GM12878 (cell line): ENCODE measurements at regions of chr19 and their contacts with region 1.

Region 1: GRCh38 chr19:9796113-9796773 is 22.6 kb downstream of the FBXL12 start:
- DNase-seq: peak; percentile 66
- ATAC-seq: peak; percentile 91
- H3K4me3 ChIP-seq: no peak overlapping the region
- H3K27ac ChIP-seq: no peak overlapping the region
- H3K4me1 ChIP-seq: no peaks in the 10 kb centered on the region
- H3K27me3 ChIP-seq: no peaks in the 10 kb centered on the region
- CTCF ChIP-seq: peak; percentile 79 to 94 (median 86)
- EP300 ChIP-seq: no peak
- POLR2A ChIP-seq: no peak
- RAD21 ChIP-seq: peak; percentile 90

Region 2: GRCh38 chr19:8654591-8655339 is 1141.5 kb before region 1 on chr19:
- CTCF ChIA-PET with region 1: no interaction called
- POLR2A ChIA-PET with region 1: no interaction called
- RAD21 ChIA-PET with region 1: no interaction called
- SMC1A ChIA-PET with region 1: no interaction called
- in situ Hi-C with region 1: no loop called
- intact Hi-C with region 1: loop called (anchors 10 kb)
- DNase-seq: no peak
- ATAC-seq: peak; percentile 73
- H3K4me3 ChIP-seq: no peak overlapping the region
- H3K27ac ChIP-seq: no peak overlapping the region
- H3K4me1 ChIP-seq: no peaks in the 10 kb centered on the region
- H3K27me3 ChIP-seq: no peaks in the 10 kb centered on the region
- CTCF ChIP-seq: peak; percentile 81 to 95 (median 88)
- EP300 ChIP-seq: no peak
- POLR2A ChIP-seq: no peak
- RAD21 ChIP-seq: peak; percentile 85

Region 3: DNA sequence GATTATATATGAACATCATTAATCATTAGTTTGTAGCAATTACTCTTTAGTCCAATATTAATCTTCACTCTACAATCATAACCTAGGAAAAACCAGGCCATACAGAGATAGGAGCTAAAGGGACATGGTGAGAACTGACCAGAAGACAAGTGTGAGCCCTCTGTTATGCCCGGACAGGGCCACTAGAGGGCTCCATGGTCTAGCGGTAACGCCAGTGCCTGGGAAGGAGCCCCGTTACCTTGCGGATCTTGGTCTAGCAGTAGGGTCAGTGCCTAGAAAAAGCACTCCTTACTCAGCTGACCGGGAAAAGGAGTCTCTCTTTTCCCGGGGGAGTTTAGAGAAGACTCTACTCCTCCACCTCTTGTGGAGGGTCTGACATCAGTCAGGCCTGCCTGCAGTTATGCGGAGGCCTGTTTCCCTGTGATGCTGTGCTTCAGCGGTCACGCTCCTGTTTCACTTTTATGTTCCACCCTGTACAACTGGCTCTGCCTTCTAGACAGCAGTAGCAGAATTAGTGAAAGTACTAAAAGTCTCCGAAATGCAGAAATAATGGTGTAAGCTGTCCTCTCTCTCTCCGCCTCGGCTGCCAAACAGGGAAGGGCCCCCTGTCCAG is 590.6 kb before region 1 on chr19:
- CTCF ChIA-PET with region 1: interaction called, 6 read pairs
- POLR2A ChIA-PET with region 1: no interaction called
- RAD21 ChIA-PET with region 1: interaction called, 3 read pairs
- SMC1A ChIA-PET with region 1: interaction called, 5 read pairs
- in situ Hi-C with region 1: loop called (anchors 5 kb)
- intact Hi-C with region 1: loop called (anchors 1 kb)
- DNase-seq: no peak
- ATAC-seq: peak; percentile 72
- H3K4me3 ChIP-seq: no peak overlapping the region
- H3K27ac ChIP-seq: no peak overlapping the region
- H3K4me1 ChIP-seq: no peaks in the 10 kb centered on the region
- H3K27me3 ChIP-seq: no peaks in the 10 kb centered on the region
- CTCF ChIP-seq: peak; percentile 69 to 84 (median 73)
- EP300 ChIP-seq: no peak
- POLR2A ChIP-seq: no peak
- RAD21 ChIP-seq: peak; percentile 80

Region 4: DNA sequence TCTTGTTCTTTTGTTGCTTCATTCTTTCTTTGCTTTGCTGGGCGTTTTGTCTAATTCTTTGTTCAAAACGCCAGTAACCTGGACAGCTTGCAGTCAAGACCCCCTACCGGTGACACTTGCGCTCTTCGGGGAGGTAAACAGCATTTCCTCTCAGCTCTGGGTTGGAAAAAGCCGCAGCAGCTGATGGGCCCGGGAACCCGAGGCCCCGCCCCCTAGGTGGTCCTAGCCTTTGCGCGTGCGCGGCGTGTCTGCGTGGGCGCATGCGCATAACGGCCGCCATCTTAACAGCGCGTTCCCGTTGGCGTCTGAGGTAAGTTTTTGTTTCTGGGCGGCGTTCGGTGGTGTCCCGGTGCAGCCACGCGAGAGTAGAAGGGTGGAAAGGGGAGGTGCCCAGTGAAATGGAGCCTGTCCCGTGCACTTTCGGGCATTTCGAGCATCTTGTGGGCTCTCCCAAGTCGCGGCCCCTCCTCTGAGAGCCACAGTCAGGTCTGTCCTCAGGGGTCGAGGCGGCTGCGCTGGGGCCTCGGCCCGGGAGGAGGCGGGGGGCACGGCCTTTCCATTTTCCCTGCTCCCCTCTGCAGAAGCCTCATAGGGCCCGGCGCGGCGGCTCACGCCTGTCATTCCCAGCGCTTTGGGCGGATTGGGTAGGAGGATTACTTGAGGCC is 472.2 kb before region 1 on chr19 and contains the start of gene ZNF559:
- CTCF ChIA-PET with region 1: no interaction called
- POLR2A ChIA-PET with region 1: no interaction called
- RAD21 ChIA-PET with region 1: no interaction called
- SMC1A ChIA-PET with region 1: no interaction called
- in situ Hi-C with region 1: loop called (anchors 10 kb)
- intact Hi-C with region 1: no loop called
- DNase-seq: peak; percentile 73
- ATAC-seq: peak; percentile 100
- H3K4me3 ChIP-seq: peak within 1 kb of the TSS; percentile 71
- H3K27ac ChIP-seq: peak within 1 kb of the TSS; percentile 51
- H3K4me1 ChIP-seq: peaks cover 3% of the 10 kb centered on the region; the same call in 1 of the 2 replicates
- H3K27me3 ChIP-seq: no peaks in the 10 kb centered on the region
- CTCF ChIP-seq: peak; percentile 19 to 34 (median 23); a peak in 3 of 6 replicates
- EP300 ChIP-seq: no peak
- POLR2A ChIP-seq: peak; percentile 88
- RAD21 ChIP-seq: 0 out of 2 replicates have a peak, but pooled peaks have one; percentile 4
- polyA plus RNA-seq, gene ZNF559: 6.1 to 10.2 TPM

Region 5: GRCh38 chr19:9621156-9622037 is 174.8 kb before region 1 on chr19 and contains the start of gene ZNF561:
- CTCF ChIA-PET with region 1: interaction called, 29 read pairs
- POLR2A ChIA-PET with region 1: interaction called, 4 read pairs
- RAD21 ChIA-PET with region 1: interaction called, 10 read pairs
- SMC1A ChIA-PET with region 1: interaction called, 8 read pairs
- in situ Hi-C with region 1: loop called (anchors 5 kb)
- intact Hi-C with region 1: loop called (anchors 1 kb)
- DNase-seq: peak; percentile 61
- ATAC-seq: peak; percentile 94
- H3K4me3 ChIP-seq: peak within 1 kb of the TSS; percentile 87
- H3K27ac ChIP-seq: peak within 1 kb of the TSS; percentile 99
- H3K4me1 ChIP-seq: peaks cover 3% of the 10 kb centered on the region; the same call in 1 of the 2 replicates
- H3K27me3 ChIP-seq: no peaks in the 10 kb centered on the region
- CTCF ChIP-seq: no peak
- EP300 ChIP-seq: 0 out of 4 replicates have a peak, but pooled peaks of 1 of the 2 experiments have one; percentile 8
- POLR2A ChIP-seq: peak; percentile 93
- RAD21 ChIP-seq: no peak
- polyA plus RNA-seq, gene ZNF561: 12.8 to 18.8 TPM

Region 6: GRCh38 chr19:10027158-10027693 is 231.0 kb after region 1 on chr19:
- CTCF ChIA-PET with region 1: no interaction called
- POLR2A ChIA-PET with region 1: no interaction called
- RAD21 ChIA-PET with region 1: no interaction called
- SMC1A ChIA-PET with region 1: no interaction called
- in situ Hi-C with region 1: no loop called
- intact Hi-C with region 1: no loop called
- DNase-seq: no peak
- ATAC-seq: no peak
- H3K4me3 ChIP-seq: no peak overlapping the region
- H3K27ac ChIP-seq: no peak overlapping the region
- H3K4me1 ChIP-seq: no peaks in the 10 kb centered on the region
- H3K27me3 ChIP-seq: peaks cover 0 to 2% of the 10 kb centered on the region in 2 experiments; a peak in 2 of 4 replicates
- CTCF ChIP-seq: no peak
- EP300 ChIP-seq: no peak
- POLR2A ChIP-seq: no peak
- RAD21 ChIP-seq: no peak